ENCODE measurements at regions of chr12 and their contacts with region 1.

Region 1: GRCh38 chr12:113174461-113175384 is 10.6 kb downstream of the DDX54 start:
- DNase-seq: peak; percentile 89
- CTCF ChIP-seq: peak; percentile 99

Region 2: DNA sequence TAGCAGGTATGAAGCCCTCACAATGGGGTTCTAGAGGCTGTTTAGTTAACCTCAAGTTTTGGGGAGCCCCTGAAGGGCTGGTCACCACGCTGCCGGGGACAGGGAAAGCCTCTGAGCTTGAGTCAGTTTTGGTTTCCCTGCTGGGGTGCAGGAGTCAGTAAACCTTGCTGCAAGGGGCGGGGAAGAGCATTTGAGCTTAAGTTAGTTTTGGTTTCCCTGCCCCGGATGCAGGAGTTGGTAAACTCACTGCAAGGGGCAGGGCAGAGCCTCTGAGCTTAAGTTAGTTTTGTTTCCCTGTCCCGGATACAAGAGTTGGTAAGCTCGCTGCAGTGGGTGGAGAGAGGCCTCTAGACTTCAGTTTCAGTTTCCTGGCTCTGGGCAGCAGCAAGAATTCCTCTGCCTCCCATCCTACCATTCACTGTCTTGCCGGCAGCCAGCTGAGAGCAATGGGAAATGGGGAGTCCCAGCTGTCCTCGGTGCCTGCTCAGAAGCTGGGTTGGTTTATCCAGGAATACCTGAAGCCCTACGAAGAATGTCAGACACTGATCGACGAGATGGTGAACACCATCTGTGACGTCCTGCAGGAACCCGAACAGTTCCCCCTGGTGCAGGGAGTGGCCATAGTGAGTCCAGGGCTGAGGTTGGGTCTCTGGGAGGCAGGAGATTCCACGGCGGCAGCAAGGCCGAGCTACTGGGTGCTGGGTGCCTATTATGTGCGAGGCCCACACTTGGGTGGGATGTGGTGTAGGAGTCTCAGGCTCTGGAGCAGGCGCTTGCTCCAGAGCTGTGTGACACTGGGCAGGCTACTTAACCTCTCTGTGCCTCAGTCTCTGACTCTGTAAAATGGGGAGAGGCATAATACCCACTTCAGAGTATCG is 196.3 kb before region 1 on chr12 and contains the start of gene OAS2:
- CTCF ChIA-PET with region 1: interaction called, 11 read pairs
- POLR2A ChIA-PET with region 1: no interaction called
- DNase-seq: peak; percentile 89
- CTCF ChIP-seq: no peak

Region 3: DNA sequence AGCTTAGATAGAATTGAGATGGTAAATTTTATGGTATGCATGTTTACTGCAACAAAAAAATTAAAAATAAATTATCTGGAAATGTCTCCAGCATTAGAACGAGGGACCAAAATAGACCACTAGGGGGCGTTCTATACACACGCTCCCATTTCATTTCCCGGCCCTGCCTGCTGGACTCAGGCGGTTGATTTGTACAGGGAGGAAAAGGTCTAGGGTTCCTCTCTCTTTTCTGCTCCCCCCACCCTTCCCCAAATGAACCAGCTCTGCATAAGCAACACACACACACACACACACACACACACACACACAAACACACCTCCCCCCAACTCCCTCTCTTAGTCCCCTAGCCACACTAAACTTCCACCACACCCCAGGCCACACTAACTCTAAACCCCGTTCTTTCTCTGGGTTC is 126.0 kb before region 1 on chr12:
- CTCF ChIA-PET with region 1: interaction called, 86 read pairs
- POLR2A ChIA-PET with region 1: no interaction called
- DNase-seq: peak; percentile 76
- CTCF ChIP-seq: peak; percentile 57

Region 4: GRCh38 chr12:113098446-113098896 is 76.3 kb before region 1 on chr12:
- CTCF ChIA-PET with region 1: interaction called, 19 read pairs
- POLR2A ChIA-PET with region 1: no interaction called
- DNase-seq: peak; percentile 83
- CTCF ChIP-seq: peak; percentile 88

Region 5: DNA sequence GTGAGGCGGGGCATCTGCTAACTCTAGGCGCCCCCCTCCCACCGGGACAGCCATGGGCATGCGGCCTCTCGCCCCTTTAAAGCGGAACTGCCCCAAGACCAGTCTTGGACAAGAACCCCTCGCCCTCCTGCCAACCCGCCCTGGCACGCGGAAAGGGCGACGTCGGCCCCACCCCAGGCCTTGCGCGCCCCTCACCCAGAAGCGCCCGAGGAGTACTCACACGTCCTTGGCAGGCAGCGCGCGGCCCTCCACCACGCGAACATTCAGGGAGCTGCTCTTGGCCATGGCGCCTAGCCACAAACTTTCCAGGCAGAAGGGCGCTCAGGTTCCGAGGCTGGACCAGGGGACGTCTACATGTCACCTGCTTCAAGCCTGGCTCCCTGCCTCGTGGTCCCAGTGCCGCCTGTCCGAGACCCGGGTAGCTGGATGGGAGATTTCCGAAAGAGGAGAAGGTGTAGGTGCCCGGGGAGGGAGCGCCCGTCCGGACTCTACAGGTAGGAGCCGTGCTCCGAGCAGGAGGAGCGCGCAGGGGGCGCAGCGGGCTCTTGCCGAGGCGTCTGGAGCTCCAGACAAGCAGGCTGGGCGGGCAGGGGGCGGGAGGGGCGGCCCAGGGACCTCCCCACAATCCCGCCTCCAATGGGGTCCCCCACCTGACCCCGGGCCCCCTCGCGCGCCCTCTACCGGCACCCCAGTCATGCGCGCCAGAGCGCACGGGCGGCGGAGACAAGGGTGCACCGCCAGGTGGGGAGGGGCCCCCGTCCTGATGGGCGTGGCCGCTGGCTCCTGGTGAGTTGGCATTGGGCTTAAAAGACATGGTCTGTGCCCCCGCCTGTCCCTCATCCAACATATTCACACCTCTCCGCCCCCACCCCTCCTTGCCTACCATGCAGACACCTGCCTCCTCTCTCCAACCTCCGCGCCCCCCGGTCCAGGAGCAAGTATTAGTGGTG is 39.3 kb before region 1 on chr12 and contains the start of gene RASAL1:
- CTCF ChIA-PET with region 1: interaction called, 16 read pairs
- POLR2A ChIA-PET with region 1: no interaction called
- DNase-seq: peak; percentile 81
- CTCF ChIP-seq: peak; percentile 59

Region 6: GRCh38 chr12:113184900-113185773 is 10.4 kb after region 1 on chr12 and contains the starts of genes DDX54 and RITA1:
- CTCF ChIA-PET with region 1: interaction called, 23 read pairs
- POLR2A ChIA-PET with region 1: no interaction called
- DNase-seq: peak; percentile 93
- CTCF ChIP-seq: no peak

Region 7: GRCh38 chr12:113230315-113231234 is 55.9 kb after region 1 on chr12:
- CTCF ChIA-PET with region 1: interaction called, 14 read pairs
- POLR2A ChIA-PET with region 1: no interaction called
- DNase-seq: no peak
- CTCF ChIP-seq: no peak

Measured in GM10248 (cell line).